ENCODE measurements at regions of chr18 and their contacts with region 1.

Region 1: DNA sequence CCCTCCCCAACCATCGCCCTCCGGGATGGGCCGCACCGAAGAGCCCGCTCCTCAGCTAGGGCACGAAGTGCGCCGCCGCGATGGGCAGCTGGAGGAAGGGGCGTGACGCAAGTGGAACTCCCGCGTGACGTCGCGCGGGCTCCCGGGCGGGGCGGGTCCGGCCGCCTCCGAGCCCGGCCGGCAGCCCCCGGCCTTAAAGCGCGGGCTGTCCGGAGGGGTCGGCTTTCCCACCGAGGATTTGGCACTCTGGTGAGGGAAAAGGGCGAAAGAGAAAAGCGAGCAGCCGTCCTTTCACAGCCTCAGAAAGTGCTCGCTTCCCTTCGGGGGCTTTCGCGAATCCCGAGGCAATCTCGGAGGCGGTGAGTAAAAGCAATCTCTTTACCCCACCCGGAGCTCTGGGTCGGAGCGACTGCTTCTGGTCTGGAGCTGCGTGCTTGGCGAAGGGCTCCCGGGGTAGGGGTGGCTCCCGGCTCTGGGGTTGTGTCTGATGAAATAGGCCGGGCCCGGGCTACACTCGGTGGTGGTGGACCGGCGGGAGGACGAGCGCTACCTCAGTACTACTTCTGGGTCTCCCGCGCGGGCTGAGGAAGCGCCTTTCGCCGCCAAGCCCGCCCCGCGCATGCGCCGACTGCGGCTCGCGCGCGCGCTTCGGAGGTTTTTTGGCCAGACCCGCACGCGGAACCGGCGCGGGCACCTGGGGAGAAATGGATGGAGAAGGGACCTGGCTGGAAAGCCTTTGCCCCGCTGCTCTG is at the start of gene RBBP8:
- DNase-seq: peak; percentile 83
- ATAC-seq: peak; percentile 85
- H3K4me3 ChIP-seq: peak within 1 kb of the TSS; percentile 77
- H3K27ac ChIP-seq: peak within 1 kb of the TSS; percentile 83
- H3K4me1 ChIP-seq: peaks cover 9% of the 10 kb centered on the region
- H3K27me3 ChIP-seq: no peaks in the 10 kb centered on the region
- CTCF ChIP-seq: no peak
- total RNA-seq, gene RBBP8: 31.9 and 41.1 TPM in 2 replicates

Region 2: GRCh38 chr18:22813648-22814328 is 119.6 kb before region 1 on chr18:
- CTCF ChIA-PET with region 1: interaction called, 3 read pairs
- POLR2A ChIA-PET with region 1: interaction called, 8 read pairs
- intact Hi-C with region 1: loop called (anchors 1 kb)
- DNase-seq: peak; percentile 70
- ATAC-seq: peak; percentile 85
- H3K4me3 ChIP-seq: no peak overlapping the region; the same call in 1 of the 2 replicates
- H3K27ac ChIP-seq: no peak overlapping the region
- H3K4me1 ChIP-seq: peaks cover 15% of the 10 kb centered on the region
- H3K27me3 ChIP-seq: no peaks in the 10 kb centered on the region
- CTCF ChIP-seq: peak; percentile 93

Region 3: GRCh38 chr18:22828171-22828570 is 105.2 kb before region 1 on chr18:
- CTCF ChIA-PET with region 1: no interaction called
- POLR2A ChIA-PET with region 1: interaction called, 3 read pairs
- intact Hi-C with region 1: loop called (anchors 5 kb)
- DNase-seq: peak; percentile 92
- ATAC-seq: peak; percentile 90
- H3K4me3 ChIP-seq: no peak overlapping the region
- H3K27ac ChIP-seq: peak overlapping the region; percentile 92
- H3K4me1 ChIP-seq: peaks cover 43% of the 10 kb centered on the region
- H3K27me3 ChIP-seq: no peaks in the 10 kb centered on the region
- CTCF ChIP-seq: no peak

Region 4: GRCh38 chr18:22846088-22846683 is 87.2 kb before region 1 on chr18:
- CTCF ChIA-PET with region 1: no interaction called
- POLR2A ChIA-PET with region 1: no interaction called
- intact Hi-C with region 1: loop called (anchors 2 kb)
- DNase-seq: peak; percentile 60
- ATAC-seq: peak; percentile 28; the same call in 1 of the 2 replicates
- H3K4me3 ChIP-seq: no peak overlapping the region
- H3K27ac ChIP-seq: no peak overlapping the region
- H3K4me1 ChIP-seq: peaks cover 25% of the 10 kb centered on the region
- H3K27me3 ChIP-seq: no peaks in the 10 kb centered on the region
- CTCF ChIP-seq: peak; percentile 76

Region 5: DNA sequence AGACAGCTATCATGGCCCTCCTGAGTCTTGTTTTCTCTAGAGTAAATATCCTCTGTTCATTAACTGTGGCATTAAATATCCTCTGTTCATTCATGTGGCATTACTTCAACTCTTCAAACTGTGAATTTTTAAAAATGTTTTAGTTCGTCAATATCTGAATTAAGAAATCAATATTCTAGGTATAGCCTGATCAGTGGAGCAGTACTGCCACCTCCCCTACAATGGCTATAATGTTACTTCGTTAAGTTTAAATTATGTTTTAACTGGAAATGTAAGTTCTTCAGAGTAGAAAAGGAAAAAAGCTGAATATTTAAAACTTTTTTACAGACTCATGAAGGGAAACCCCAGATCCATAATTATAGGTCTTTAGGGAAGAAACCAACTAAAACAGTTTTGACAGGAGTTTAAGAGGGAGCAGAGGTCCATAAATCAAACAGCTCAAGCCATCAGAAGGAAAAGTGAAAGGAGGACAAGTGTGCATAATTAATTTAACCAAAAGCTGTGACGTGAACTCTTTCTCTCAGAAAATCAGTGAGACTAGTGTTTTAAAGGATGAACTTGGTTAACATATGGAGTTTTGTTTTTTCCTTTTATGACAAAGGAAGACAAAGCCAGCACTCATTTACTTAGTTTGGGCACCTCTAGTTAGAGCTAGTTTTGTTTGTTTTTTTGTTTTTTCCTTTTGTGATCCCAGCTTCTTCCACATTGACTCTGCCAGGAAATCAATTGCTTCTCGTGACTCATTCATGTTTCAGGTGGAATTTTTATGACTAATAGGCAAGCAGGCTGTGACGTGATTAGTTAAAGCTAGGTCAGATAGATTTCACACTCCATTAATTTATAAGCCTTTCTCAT is 44.7 kb after region 1 on chr18:
- CTCF ChIA-PET with region 1: interaction called, 6 read pairs
- POLR2A ChIA-PET with region 1: no interaction called
- intact Hi-C with region 1: loop called (anchors 1 kb)
- DNase-seq: peak; percentile 83
- ATAC-seq: peak; percentile 92
- H3K4me3 ChIP-seq: no peak overlapping the region
- H3K27ac ChIP-seq: peak overlapping the region; percentile 78
- H3K4me1 ChIP-seq: peaks cover 17% of the 10 kb centered on the region
- H3K27me3 ChIP-seq: no peaks in the 10 kb centered on the region
- CTCF ChIP-seq: no peak

Region 6: DNA sequence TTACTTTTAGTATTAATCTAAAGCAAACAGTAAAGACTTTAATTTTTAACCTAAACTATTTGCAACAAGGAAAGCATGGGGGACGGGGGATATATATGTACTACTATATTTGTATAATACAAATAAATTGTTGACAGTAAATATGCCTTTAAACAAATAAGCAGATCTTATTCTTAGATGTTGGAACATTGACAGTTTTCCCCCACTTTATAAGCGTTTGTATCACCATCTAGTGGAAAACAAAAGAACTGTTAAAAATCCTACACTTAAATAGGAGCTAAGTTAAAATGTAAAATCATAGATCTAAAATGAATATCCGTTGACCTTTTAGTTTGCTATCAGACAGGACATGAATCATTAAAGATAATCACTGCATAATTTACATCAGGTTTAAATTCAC is 49.8 kb after region 1 on chr18:
- CTCF ChIA-PET with region 1: interaction called, 8 read pairs
- POLR2A ChIA-PET with region 1: no interaction called
- intact Hi-C with region 1: loop called (anchors 1 kb)
- DNase-seq: peak; percentile 67
- ATAC-seq: no peak
- H3K4me3 ChIP-seq: no peak overlapping the region
- H3K27ac ChIP-seq: no peak overlapping the region
- H3K4me1 ChIP-seq: peaks cover 7% of the 10 kb centered on the region
- H3K27me3 ChIP-seq: no peaks in the 10 kb centered on the region
- CTCF ChIP-seq: peak; percentile 69

Measured in PC-3 (cell line).